SK-N-SH (cell line): ENCODE measurements at regions of chr17 and their contacts with region 1.

Region 1: GRCh38 chr17:42577532-42578281 is at the start of gene PSMC3IP:
- DNase-seq: peak; percentile 96
- H3K4me3 ChIP-seq: peak within 1 kb of the TSS; percentile 77 to 91
- H3K27ac ChIP-seq: peak within 1 kb of the TSS; percentile 80 to 89
- H3K4me1 ChIP-seq: peaks cover 7 to 8% of the 10 kb centered on the region in 2 experiments; a peak in 2 of 4 replicates
- H3K27me3 ChIP-seq: no peaks in the 10 kb centered on the region
- CTCF ChIP-seq: peak; percentile 52
- EP300 ChIP-seq: 0 out of 4 replicates have a peak, but pooled peaks of 1 of the 2 experiments have one; percentile 15
- RAD21 ChIP-seq: no peak
- polyA plus RNA-seq, gene PSMC3IP: 14.2 and 17.3 TPM in 2 replicates

Region 2: GRCh38 chr17:42598905-42599304 is 21.2 kb after region 1 on chr17:
- CTCF ChIA-PET with region 1: interaction called, 33 read pairs
- POLR2A ChIA-PET with region 1: interaction called, 3 read pairs
- DNase-seq: no peak
- H3K4me3 ChIP-seq: no peak overlapping the region
- H3K27ac ChIP-seq: no peak overlapping the region
- H3K4me1 ChIP-seq: no peaks in the 10 kb centered on the region
- H3K27me3 ChIP-seq: no peaks in the 10 kb centered on the region
- CTCF ChIP-seq: no peak
- EP300 ChIP-seq: no peak
- RAD21 ChIP-seq: no peak

Region 3: GRCh38 chr17:42618442-42619150 is 40.9 kb after region 1 on chr17:
- CTCF ChIA-PET with region 1: interaction called, 13 read pairs
- POLR2A ChIA-PET with region 1: interaction called, 5 read pairs
- DNase-seq: peak; percentile 55
- H3K4me3 ChIP-seq: no peak overlapping the region
- H3K27ac ChIP-seq: peak overlapping the region in 1 of 2 experiments; percentile 71; a peak in 2 of 4 replicates
- H3K4me1 ChIP-seq: peaks cover 0 to 16% of the 10 kb centered on the region in 2 experiments; a peak in 1 of 4 replicates
- H3K27me3 ChIP-seq: no peaks in the 10 kb centered on the region
- CTCF ChIP-seq: no peak
- EP300 ChIP-seq: no peak
- RAD21 ChIP-seq: peak; percentile 61

Region 4: DNA sequence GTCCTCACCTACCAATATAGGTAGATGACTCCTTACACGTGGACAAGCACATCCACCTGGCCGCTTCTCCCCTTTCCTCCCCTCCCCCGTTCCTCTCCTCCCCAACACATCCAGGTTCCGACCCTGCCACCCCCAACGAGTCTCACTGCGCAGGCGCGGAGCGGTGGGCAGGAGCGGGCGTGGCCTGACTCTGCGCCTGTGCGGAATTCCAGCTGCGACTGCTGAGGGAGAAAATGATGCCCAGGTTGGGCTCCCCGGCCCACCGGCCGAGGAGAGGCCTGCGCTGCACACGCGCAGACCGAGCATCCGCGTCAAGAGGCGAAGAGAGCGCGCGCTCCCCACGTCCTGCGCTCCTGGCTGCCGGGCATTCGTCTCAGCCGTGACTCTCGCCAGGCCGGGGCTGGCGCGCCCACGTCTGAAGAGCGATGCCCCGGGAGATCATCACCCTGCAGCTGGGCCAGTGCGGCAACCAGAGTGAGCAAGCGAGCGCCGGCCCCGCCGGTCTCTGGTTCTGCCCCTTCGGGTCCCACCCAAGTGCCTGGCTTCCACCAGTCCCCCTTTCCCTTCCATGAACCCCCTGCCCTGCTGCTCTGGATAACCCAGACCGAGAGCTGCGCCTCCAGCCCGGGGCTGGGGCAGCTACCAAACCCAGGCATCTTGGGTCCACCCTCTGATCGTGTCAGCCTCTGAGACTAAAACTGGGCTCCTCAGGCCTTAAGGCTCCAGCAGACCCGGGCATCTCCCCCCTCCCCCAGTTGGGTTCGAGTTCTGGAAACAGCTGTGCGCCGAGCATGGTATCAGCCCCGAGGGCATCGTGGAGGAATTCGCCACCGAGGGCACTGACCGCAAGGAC is 81.6 kb after region 1 on chr17 and contains the start of gene TUBG2:
- CTCF ChIA-PET with region 1: interaction called, 36 read pairs
- POLR2A ChIA-PET with region 1: interaction called, 8 read pairs
- DNase-seq: peak; percentile 98
- H3K4me3 ChIP-seq: peak within 1 kb of the TSS; percentile 60 to 72
- H3K27ac ChIP-seq: peak within 1 kb of the TSS; percentile 81 to 87
- H3K4me1 ChIP-seq: peaks cover 12 to 13% of the 10 kb centered on the region in 2 experiments; a peak in 2 of 4 replicates
- H3K27me3 ChIP-seq: no peaks in the 10 kb centered on the region
- CTCF ChIP-seq: no peak
- EP300 ChIP-seq: 0 out of 4 replicates have a peak, but pooled peaks of 1 of the 2 experiments have one; percentile 32
- RAD21 ChIP-seq: 0 out of 2 replicates have a peak, but pooled peaks have one; percentile 27
- polyA plus RNA-seq, gene TUBG2: 27.6 and 33.9 TPM in 2 replicates

Region 5: DNA sequence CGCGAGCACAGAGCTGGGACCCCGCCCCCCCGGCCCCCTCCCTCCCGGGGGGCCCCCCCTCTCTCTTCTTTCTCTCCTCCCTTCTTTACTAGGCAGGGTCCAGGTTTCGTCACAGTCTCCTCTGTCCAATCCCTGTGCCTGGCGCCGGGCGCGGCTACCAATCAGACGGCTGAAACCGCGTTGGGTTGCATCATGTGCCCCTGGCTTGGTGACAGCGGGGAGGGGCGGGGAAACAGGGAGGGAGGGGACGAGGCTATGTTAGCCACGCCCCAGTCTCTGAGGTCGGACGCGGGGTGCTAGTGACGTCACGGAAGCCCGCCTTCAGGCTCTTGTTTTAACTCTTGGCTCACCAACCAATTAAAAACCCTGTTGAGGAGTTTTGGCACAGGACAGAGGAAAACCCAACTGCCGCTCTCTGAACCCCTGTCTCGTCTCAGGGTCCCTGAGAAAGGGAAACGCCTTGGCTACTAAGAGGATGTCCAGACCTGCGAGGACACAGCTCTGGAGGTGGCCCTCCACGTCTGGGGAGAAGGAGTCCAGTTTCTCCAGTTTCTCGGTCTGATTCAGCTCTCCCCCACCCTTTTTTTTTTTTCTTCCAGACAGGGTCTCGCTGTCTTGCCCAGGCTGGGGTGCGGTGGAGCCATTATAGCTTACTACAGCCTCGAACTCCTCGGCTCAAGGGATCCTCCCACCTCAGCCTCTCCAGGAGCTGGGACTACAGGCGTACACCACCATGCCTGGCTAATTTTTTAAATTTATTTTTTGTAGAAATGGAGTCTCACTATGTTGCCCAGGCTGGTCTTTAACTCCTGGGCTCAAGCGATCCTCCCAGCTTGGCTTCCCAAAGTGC is 99.5 kb after region 1 on chr17:
- CTCF ChIA-PET with region 1: interaction called, 221 read pairs
- POLR2A ChIA-PET with region 1: interaction called, 63 read pairs
- DNase-seq: peak; percentile 97
- H3K4me3 ChIP-seq: peak overlapping the region; percentile 91 to 98
- H3K27ac ChIP-seq: peak overlapping the region; percentile 87 to 99
- H3K4me1 ChIP-seq: peaks cover 15 to 52% of the 10 kb centered on the region in 2 experiments
- H3K27me3 ChIP-seq: no peaks in the 10 kb centered on the region
- CTCF ChIP-seq: no peak
- EP300 ChIP-seq: 0 out of 4 replicates have a peak, but pooled peaks of 1 of the 2 experiments have one; percentile 1
- RAD21 ChIP-seq: no peak

Region 6: DNA sequence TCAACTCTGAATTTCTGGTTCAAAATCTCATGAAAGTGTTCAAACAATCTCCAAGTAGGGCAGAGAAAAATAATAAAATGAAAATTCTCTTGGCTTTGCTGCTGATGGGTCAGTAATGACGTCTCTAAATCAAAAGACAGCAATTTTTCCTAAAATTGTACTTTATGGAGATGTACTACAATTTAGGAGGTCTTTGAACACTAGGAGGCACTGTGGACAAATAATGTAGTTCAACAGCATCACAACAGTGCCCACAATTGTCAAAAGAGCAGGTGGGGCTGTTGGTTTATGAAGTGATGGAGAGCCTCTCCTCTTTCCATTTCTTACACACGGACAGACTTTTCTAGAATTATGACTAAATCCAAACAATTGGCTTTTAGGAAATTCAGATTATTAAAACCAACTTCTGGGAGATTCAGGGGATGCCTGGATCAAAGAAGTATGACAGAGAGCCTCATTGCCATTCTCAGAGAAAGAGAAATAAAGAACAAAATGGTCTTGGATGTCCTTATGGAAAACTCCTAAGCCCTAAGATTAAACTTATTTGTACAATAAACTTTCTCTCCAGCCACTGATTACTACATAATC is 143.4 kb after region 1 on chr17:
- CTCF ChIA-PET with region 1: interaction called, 11 read pairs
- POLR2A ChIA-PET with region 1: no interaction called
- DNase-seq: peak; percentile 75
- H3K4me3 ChIP-seq: no peak overlapping the region; a peak in 1 of 4 replicates
- H3K27ac ChIP-seq: no peak overlapping the region
- H3K4me1 ChIP-seq: no peaks in the 10 kb centered on the region
- H3K27me3 ChIP-seq: no peaks in the 10 kb centered on the region
- CTCF ChIP-seq: peak; percentile 81
- EP300 ChIP-seq: no peak
- RAD21 ChIP-seq: peak; percentile 83